ENCODE measurements at regions of chr2 and their contacts with region 1.

Region 1: GRCh38 chr2:102137138-102137537 is 5.4 kb upstream of the IL1R1 start:
- DNase-seq: peak; percentile 72
- H3K4me3 Mint-ChIP-seq: no peak overlapping the region
- H3K27ac Mint-ChIP-seq: peak overlapping the region; percentile 62
- H3K4me1 Mint-ChIP-seq: peaks cover 39% of the 10 kb centered on the region
- H3K27me3 Mint-ChIP-seq: peaks cover 26% of the 10 kb centered on the region

Region 2: DNA sequence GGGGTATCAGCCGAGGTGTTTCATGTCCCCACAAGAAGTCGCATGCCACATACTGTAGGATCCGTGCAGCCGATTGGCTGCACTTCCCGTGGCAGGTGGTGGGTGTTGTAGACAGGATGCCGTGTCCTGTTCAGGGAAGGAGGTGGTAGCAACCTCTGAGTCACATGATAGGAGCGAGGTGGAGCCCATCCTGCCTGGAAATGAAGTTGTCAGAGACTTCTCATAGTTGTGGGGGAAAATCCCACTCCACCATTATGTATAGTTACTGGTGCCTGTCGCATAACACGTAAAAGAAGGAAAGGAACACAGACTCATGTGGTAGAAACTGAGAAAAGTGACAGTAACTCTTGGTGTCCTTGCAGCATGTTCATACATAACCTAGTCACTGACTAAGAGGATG is 236.8 kb before region 1 on chr2:
- CTCF ChIA-PET with region 1: no interaction called
- intact Hi-C with region 1: loop called (anchors 1 kb)
- DNase-seq: peak; percentile 87
- H3K4me3 Mint-ChIP-seq: no peak overlapping the region
- H3K27ac Mint-ChIP-seq: peak overlapping the region; percentile 87
- H3K4me1 Mint-ChIP-seq: peaks cover 33% of the 10 kb centered on the region
- H3K27me3 Mint-ChIP-seq: peaks cover 2% of the 10 kb centered on the region

Region 3: DNA sequence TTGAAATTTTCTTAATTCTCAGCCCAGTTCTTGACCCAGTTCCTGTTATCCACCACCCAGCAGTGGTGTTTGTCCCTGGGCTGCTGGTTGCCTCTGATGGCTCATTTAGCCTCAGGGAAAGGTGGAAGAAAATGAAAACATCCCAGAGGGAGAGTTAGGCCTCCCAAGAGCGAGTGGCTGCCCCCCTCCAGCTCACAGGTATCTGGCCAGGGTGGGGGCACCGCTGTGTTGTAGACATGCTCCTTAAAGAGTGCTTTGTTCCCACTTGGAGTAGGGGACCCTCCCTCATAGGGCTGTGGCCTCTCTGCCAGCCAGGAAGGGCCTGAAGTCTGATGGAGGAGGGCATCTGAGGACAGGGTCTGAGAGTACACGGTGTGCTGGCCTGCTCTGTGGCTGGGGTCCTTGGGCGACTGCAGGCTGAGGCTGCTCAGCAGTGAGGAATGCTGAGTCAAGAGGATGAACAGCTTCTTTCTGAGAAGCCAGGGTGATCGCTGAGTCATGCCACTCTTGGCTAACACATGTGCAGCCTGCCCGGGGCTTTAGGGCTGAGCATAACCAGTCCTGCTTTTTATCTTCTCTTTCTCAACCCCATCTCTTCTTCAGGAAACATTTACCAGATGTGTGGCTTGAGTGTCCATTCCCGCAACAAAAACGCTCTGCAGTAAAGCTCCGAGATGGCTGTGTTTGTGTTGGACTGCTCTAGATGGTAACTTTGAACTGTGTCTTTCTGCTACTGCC is 73.0 kb before region 1 on chr2:
- CTCF ChIA-PET with region 1: no interaction called
- intact Hi-C with region 1: loop called (anchors 1 kb)
- DNase-seq: peak; percentile 73
- H3K4me3 Mint-ChIP-seq: no peak overlapping the region
- H3K27ac Mint-ChIP-seq: peak overlapping the region; percentile 44
- H3K4me1 Mint-ChIP-seq: peaks cover 27% of the 10 kb centered on the region
- H3K27me3 Mint-ChIP-seq: no peaks in the 10 kb centered on the region

Region 4: GRCh38 chr2:102126651-102127050 is 10.5 kb before region 1 on chr2:
- CTCF ChIA-PET with region 1: interaction called, 9 read pairs
- intact Hi-C with region 1: loop called (anchors 1 kb)
- DNase-seq: no peak
- H3K4me3 Mint-ChIP-seq: no peak overlapping the region
- H3K27ac Mint-ChIP-seq: peak overlapping the region; percentile 81
- H3K4me1 Mint-ChIP-seq: peaks cover 31% of the 10 kb centered on the region
- H3K27me3 Mint-ChIP-seq: peaks cover 3% of the 10 kb centered on the region

Region 5: GRCh38 chr2:102498414-102498813 is 361.3 kb after region 1 on chr2:
- CTCF ChIA-PET with region 1: no interaction called
- intact Hi-C with region 1: no loop called
- DNase-seq: no peak
- H3K4me3 Mint-ChIP-seq: no peak overlapping the region
- H3K27ac Mint-ChIP-seq: no peak overlapping the region
- H3K4me1 Mint-ChIP-seq: peaks cover 5% of the 10 kb centered on the region
- H3K27me3 Mint-ChIP-seq: peaks cover 9% of the 10 kb centered on the region

Region 6: DNA sequence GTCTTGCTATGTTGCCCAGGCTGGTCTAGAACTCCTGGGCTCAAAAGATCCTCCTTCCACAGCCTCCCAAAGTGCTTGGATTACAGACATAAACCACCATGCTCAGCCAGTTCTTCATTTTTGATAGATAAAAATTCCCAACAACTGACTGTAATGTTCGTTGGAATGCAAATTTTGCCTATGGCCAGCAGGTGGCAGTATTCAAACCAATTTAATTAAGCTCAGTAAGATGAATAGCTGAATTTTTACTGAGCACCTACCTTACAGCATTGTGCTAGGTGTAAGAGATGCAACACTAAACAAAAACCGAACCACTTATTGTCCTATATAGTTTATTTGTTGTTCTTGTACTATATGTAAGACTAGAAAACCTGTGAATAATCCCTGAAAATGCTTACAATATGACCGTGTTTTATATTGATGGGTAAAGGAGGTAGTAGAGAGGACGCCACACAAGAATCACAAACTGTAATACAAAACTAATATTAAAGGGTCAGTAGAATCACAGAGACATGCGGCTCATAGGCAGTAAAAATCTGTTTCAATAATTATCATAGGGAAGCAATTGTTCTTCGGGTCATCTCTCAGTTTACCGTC is 616.5 kb after region 1 on chr2:
- CTCF ChIA-PET with region 1: no interaction called
- intact Hi-C with region 1: no loop called
- DNase-seq: peak; percentile 41
- H3K4me3 Mint-ChIP-seq: no peak overlapping the region
- H3K27ac Mint-ChIP-seq: no peak overlapping the region
- H3K4me1 Mint-ChIP-seq: no peaks in the 10 kb centered on the region
- H3K27me3 Mint-ChIP-seq: no peaks in the 10 kb centered on the region